GM13976 (cell line): ENCODE measurements at regions of chr1 and their contacts with region 1.

Region 1: DNA sequence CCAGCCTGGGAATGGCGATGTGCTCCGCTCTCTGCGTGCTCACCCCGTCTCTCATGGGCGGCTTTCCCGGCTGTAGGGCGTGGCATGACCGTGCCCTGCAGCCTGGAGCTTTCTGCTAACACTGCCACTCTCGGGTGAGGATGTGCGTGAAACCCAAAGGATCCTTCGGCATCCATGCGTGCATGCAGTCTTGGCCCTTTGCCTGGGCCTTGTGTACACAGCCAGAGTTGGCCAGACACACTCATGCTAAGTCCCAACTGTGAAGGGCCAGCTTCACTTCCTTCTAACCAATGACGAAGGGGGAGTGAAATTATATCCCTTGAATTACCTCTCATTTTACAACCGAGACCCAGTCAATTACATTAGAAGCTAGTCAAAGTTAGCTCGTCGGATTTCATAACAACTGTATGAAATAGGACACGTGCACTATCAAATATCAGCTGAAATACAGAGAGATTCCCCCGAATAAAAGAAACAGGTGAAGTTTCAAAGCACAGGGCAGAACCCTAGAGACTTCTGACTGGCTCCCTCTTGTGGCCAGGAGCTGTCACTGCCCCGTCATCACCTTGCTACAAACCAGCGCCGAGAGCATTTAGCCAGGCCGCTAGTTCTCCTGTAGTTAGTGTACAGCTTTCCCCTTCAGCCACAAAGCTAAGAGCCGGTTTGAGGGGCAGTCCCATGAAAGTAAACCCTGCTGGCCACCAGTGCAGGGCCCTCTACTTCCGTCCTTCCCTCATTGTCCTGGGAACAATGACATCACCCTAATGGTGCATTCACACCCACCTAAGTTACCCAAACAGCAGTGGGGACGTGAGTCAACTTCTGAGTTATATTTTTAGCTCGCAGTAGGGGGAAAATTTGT is 63.4 kb upstream of the COA6 start:
- DNase-seq: peak; percentile 86
- CTCF ChIP-seq: peak; percentile 86

Region 2: GRCh38 chr1:233971753-233972152 is 338.1 kb before region 1 on chr1:
- in situ Hi-C with region 1: no loop called
- DNase-seq: no peak
- CTCF ChIP-seq: no peak

Region 3: DNA sequence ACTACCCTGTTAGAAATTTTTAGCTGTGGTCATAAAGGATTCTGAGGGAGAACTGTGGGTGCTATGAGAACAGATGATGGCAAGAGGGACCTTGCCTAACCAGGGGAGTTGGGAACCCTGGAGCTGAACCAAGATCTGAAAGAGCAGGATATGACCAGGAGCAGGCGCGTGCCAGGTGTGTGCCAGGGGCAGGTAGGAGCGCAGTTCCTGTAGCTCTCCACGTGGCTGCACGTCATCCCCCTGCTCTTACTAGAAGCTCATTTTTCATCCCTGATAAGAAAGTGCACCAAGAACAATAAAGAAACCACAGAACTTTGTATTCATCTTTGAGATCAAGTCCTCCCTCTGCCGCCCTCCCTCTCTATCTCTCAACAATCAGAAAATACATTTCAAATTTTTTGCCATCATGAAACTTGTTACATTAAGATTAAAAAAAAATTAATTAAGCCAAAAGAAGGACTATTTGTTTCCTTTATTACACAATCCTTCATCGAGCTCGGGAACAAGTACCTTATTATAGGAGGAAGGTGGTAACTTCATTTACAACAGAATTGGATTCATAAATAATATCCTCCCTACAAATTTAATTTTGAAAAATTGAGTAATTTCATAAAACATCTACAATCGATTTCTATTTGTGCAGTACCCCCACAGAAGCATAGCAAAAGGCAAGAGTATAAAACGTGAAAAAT is 326.9 kb before region 1 on chr1:
- in situ Hi-C with region 1: no loop called
- DNase-seq: no peak
- CTCF ChIP-seq: no peak

Region 4: DNA sequence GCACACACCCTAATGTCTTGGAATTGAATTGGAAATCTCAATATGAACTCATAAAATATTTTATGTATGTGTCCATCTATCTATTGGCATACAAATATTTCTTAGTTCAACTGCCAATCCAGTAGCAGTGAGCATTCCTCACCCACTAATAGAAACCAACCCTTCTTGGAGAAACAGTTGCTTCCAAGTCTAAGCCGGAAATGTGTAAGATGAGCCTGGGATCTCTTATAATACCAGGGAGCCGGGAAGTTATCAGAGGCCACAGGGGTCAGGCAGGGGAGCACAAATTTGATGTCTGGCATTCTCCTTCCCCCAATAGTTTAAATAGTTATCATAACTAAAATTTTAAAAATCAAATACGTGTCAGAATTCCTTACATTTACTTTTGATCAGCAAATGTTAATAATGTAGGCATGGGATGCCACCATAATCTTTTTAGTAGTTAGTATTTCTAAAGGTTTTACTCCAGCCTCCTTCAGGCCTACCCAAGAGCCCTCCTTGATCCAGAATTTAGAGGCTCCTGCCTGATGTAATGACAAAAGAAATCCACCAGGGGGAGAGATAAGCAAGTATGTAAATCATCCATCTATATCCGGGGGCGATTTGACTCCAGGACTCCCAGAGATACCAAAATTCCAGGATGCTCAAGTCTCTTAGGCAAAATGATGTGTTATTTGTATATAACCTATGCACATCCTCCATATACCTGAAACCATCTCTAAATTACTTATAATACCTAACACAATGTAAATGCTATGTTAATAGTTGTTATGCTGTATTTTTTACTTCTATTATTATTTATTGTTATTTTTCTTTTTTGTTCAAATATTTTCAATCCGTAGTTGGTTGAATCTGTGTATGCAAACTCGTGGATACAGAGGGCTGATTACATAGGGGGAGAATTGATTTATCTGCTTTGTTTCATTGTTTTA is 155.2 kb before region 1 on chr1:
- in situ Hi-C with region 1: loop called (anchors 10 kb)
- DNase-seq: peak; percentile 53
- CTCF ChIP-seq: peak; percentile 55

Region 5: GRCh38 chr1:234212764-234213657 is 96.8 kb before region 1 on chr1:
- in situ Hi-C with region 1: loop called (anchors 10 kb)
- DNase-seq: peak; percentile 74
- CTCF ChIP-seq: peak; percentile 50

Region 6: GRCh38 chr1:234230414-234230862 is 79.4 kb before region 1 on chr1:
- in situ Hi-C with region 1: no loop called
- DNase-seq: peak; percentile 43
- CTCF ChIP-seq: no peak

Region 7: GRCh38 chr1:234544087-234544579 is 234.3 kb after region 1 on chr1:
- in situ Hi-C with region 1: no loop called
- DNase-seq: no peak
- CTCF ChIP-seq: no peak